Caco-2 (cell line): ENCODE measurements at regions of chr4 and their contacts with region 1.

Region 1: DNA sequence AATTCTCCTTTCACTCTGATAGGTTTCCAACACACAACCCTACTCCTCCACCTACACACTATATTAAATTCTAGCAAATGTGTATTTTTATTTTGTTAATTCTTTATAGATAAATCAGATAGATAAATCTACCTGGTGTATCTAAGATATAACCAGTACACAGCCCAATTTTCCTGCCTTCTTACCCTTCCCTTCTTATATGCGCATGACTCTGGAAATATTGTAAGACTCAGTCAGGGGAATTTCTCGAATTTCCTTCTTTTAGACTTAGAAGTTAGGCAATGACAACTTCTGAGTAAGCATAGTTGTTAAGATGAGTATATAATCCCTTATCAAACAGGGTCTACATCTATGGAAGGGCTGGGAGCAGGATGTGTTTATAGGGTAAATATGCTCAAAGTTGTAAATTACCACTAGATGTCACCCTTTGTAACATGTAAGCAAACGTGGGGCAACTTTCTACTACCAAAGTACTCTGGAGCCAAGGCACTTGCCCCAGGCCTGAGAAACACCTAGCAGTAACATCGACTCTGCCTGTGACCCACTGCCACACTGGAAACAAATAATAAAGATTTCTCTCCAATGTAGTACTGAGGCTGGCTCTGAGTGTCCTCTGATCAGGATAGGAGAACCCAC is 444.7 kb downstream of the IQCM start:
- DNase-seq: peak; percentile 31 to 38
- H3K4me3 ChIP-seq: no peak overlapping the region
- H3K4me3 Mint-ChIP-seq: no peak overlapping the region
- H3K27ac Mint-ChIP-seq: no peak overlapping the region
- H3K4me1 ChIP-seq: no peaks in the 10 kb centered on the region
- H3K4me1 Mint-ChIP-seq: no peaks in the 10 kb centered on the region
- H3K27me3 ChIP-seq: no peaks in the 10 kb centered on the region
- H3K27me3 Mint-ChIP-seq: no peaks in the 10 kb centered on the region
- CTCF ChIP-seq: peak; percentile 19 to 44

Region 2: GRCh38 chr4:149512501-149512900 is 141.6 kb after region 1 on chr4:
- CTCF ChIA-PET with region 1: no interaction called
- POLR2A ChIA-PET with region 1: no interaction called
- intact Hi-C with region 1: loop called (anchors 1 kb)
- DNase-seq: no peak
- H3K4me3 ChIP-seq: no peak overlapping the region
- H3K4me3 Mint-ChIP-seq: no peak overlapping the region
- H3K27ac Mint-ChIP-seq: no peak overlapping the region
- H3K4me1 ChIP-seq: no peaks in the 10 kb centered on the region
- H3K4me1 Mint-ChIP-seq: no peaks in the 10 kb centered on the region
- H3K27me3 ChIP-seq: no peaks in the 10 kb centered on the region
- H3K27me3 Mint-ChIP-seq: no peaks in the 10 kb centered on the region
- CTCF ChIP-seq: no peak

Region 3: GRCh38 chr4:149549911-149550310 is 179.0 kb after region 1 on chr4:
- CTCF ChIA-PET with region 1: no interaction called
- POLR2A ChIA-PET with region 1: no interaction called
- intact Hi-C with region 1: loop called (anchors 1 kb)
- DNase-seq: peak; percentile 17 to 31
- H3K4me3 ChIP-seq: no peak overlapping the region
- H3K4me3 Mint-ChIP-seq: no peak overlapping the region
- H3K27ac Mint-ChIP-seq: no peak overlapping the region
- H3K4me1 ChIP-seq: no peaks in the 10 kb centered on the region
- H3K4me1 Mint-ChIP-seq: no peaks in the 10 kb centered on the region
- H3K27me3 ChIP-seq: no peaks in the 10 kb centered on the region
- H3K27me3 Mint-ChIP-seq: peaks cover 4% of the 10 kb centered on the region
- CTCF ChIP-seq: peak in 1 of 2 experiments; percentile 24

Region 4: GRCh38 chr4:149645790-149646189 is 274.9 kb after region 1 on chr4:
- CTCF ChIA-PET with region 1: no interaction called
- POLR2A ChIA-PET with region 1: no interaction called
- intact Hi-C with region 1: loop called (anchors 1 kb)
- DNase-seq: peak in 1 of 2 experiments; percentile 7
- H3K4me3 ChIP-seq: no peak overlapping the region
- H3K4me3 Mint-ChIP-seq: no peak overlapping the region
- H3K27ac Mint-ChIP-seq: no peak overlapping the region
- H3K4me1 ChIP-seq: no peaks in the 10 kb centered on the region
- H3K4me1 Mint-ChIP-seq: no peaks in the 10 kb centered on the region
- H3K27me3 ChIP-seq: no peaks in the 10 kb centered on the region
- H3K27me3 Mint-ChIP-seq: peaks cover 3% of the 10 kb centered on the region
- CTCF ChIP-seq: peak in 1 of 2 experiments; percentile 23